Esophagus muscularis mucosa (tissue), 4 donors: ENCODE measurements at regions of chr5 and their contacts with region 1.

Region 1: GRCh38 chr5:136174021-136174659 is 18.8 kb downstream of the SMIM32 start:
- DNase-seq: no peak
- H3K4me3 ChIP-seq: no peak overlapping the region
- H3K27ac ChIP-seq: no peak overlapping the region
- H3K4me1 ChIP-seq: no peaks in the 10 kb centered on the region
- H3K27me3 ChIP-seq: no peaks in the 10 kb centered on the region
- CTCF ChIP-seq: peak; percentile 41 to 56 (median 47)
- EP300 ChIP-seq: no peak
- POLR2A ChIP-seq: no peak

Region 2: DNA sequence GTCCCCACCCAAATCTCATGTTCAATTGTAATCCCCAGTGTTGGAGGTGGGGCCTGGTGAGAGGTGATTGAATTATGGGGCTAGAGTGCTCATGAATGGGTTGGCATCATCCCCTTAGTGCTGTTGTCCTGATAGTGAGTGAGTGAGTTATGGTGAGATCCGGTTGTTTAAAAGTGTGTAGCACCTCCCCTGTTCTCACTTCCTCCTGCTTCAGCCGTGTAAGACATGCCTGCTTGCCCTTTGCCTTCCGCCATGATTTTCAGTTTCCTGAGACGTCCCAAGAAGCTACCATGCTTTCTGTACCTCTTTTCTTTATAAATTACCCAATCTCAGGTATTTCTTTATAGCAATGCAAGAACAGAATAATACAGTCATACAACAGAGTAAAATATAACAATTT is 218.6 kb before region 1 on chr5:
- intact Hi-C with region 1: no loop called
- DNase-seq: no peak
- H3K4me3 ChIP-seq: no peak overlapping the region
- H3K27ac ChIP-seq: no peak overlapping the region
- H3K4me1 ChIP-seq: no peaks in the 10 kb centered on the region
- H3K27me3 ChIP-seq: no peaks in the 10 kb centered on the region
- CTCF ChIP-seq: no peak
- EP300 ChIP-seq: no peak
- POLR2A ChIP-seq: no peak

Region 3: DNA sequence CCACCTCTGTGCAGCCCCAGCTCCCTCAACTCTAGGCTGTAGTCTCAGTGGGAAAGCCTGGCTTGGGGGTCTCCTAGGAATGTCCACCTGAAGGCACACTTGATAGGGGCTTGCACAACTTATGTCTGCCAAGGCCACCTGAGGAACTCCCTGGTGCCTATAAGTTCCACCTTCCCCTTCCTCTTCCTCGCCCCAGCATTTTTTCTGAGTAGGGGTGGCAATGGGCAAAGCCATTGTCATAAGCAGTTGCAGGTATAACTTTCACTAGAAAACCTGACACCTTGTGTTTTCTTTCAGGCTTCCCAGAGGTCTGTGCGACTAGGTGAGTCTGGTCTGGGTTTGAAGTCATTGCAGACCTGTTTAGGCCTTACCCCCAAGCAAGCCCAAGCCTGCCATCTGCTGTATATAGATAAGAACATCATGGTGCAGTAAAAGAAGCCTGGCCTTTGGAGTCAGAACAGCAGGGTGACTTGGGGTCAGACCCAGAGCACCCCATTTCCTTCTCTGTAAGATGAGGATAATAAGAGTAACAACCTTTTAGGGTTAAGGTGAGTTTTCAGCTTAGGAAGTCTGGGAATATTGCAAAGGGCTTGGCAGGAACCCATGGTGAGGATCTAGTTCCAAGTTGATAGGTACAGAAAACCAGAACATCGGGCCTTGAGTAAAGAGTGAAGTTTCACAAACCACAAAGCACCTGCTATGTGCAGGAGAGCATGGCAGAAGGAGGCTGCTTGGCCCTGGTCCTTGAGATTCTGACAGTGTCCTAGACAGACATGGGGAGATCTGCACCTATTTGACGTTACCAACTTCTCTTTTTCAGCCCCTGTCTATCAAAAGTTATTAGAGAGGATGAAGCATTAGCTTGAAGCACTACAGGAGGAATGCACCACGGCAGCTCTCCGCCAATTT is 111.5 kb before region 1 on chr5:
- intact Hi-C with region 1: loop called (anchors 10 kb)
- DNase-seq: no peak
- H3K4me3 ChIP-seq: no peak overlapping the region
- H3K27ac ChIP-seq: peak overlapping the region in 1 of 4 donors; percentile 1
- H3K4me1 ChIP-seq: peaks cover 26 to 63% (median 54%) of the 10 kb centered on the region in 4 donors
- H3K27me3 ChIP-seq: no peaks in the 10 kb centered on the region
- CTCF ChIP-seq: peak; percentile 36 to 57 (median 52)
- EP300 ChIP-seq: no peak
- POLR2A ChIP-seq: no peak